Activated CD4-positive, alpha-beta memory T cell treated with anti-CD3 and anti-CD28 coated beads for 36 hours (primary cell): ENCODE measurements at regions of chr1 and their contacts with region 1.

Region 1: DNA sequence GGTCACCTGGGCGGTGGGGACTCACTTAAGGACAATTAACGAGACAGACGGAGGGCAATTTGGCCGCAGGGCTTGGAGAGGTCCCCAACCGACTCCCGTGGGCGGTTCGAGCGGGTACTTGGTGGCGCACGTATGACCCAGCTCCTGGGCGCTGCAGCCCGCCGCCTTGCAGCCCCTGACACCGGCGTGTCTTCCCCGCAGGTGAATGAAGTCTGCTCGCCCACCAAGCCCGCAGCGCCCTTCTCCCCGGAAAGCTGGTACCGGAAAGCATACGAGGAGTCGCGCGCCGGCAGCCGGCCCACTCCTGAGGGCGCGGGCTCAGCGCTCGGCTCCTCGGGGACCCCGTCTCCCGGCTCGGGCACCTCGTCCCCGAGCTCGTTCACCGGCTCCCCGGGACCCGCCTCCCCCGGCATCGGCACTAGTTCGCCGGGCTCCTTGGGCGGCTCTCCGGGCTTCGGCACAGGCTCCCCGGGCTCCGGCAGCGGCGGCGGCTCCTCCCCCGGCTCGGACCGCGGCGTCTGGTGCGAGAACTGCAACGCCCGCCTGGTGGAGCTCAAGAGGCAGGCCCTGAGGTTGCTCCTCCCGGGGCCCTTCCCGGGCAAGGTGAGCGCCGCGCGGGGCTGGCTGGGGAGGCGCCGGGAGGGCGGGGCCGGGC is 1.4 kb downstream of the KIF26B start:
- DNase-seq: peak; percentile 89
- H3K4me3 Mint-ChIP-seq: peak overlapping the region; percentile 56
- H3K27ac Mint-ChIP-seq: no peak overlapping the region
- H3K4me1 Mint-ChIP-seq: peaks cover 22% of the 10 kb centered on the region
- H3K27me3 Mint-ChIP-seq: peaks cover 55% of the 10 kb centered on the region

Region 2: GRCh38 chr1:245019910-245020486 is 136.2 kb before region 1 on chr1:
- CTCF ChIA-PET with region 1: no interaction called
- POLR2A ChIA-PET with region 1: no interaction called
- intact Hi-C with region 1: no loop called
- DNase-seq: no peak
- H3K4me3 Mint-ChIP-seq: no peak overlapping the region
- H3K27ac Mint-ChIP-seq: no peak overlapping the region
- H3K4me1 Mint-ChIP-seq: no peaks in the 10 kb centered on the region
- H3K27me3 Mint-ChIP-seq: no peaks in the 10 kb centered on the region

Region 3: DNA sequence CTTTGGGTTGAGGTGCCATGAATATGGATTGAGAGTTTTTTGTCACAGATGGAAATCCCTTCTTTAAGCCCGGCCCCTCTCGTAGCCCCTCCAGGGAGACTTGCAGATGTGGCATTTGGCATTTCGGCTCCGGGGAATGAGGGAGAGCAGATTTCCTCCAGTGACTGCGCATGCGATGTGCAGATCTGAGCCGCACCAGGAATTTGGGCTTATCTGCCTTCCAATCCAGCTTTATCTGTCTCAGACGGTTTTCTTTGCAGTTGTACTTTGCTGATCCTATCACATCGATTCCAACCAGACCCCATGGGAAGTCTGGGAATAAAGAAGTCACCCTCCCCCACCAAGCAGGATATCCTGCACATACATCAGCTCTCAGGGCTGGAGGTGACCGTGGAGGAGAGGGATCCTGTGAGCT is 10.3 kb after region 1 on chr1:
- CTCF ChIA-PET with region 1: interaction called, 12 read pairs
- POLR2A ChIA-PET with region 1: no interaction called
- intact Hi-C with region 1: no loop called
- DNase-seq: no peak
- H3K4me3 Mint-ChIP-seq: no peak overlapping the region
- H3K27ac Mint-ChIP-seq: no peak overlapping the region
- H3K4me1 Mint-ChIP-seq: no peaks in the 10 kb centered on the region
- H3K27me3 Mint-ChIP-seq: peaks cover 54% of the 10 kb centered on the region

Region 4: GRCh38 chr1:245380790-245381535 is 224.8 kb after region 1 on chr1:
- CTCF ChIA-PET with region 1: interaction called, 4 read pairs
- POLR2A ChIA-PET with region 1: no interaction called
- intact Hi-C with region 1: loop called (anchors 2 kb)
- DNase-seq: no peak
- H3K4me3 Mint-ChIP-seq: no peak overlapping the region
- H3K27ac Mint-ChIP-seq: no peak overlapping the region
- H3K4me1 Mint-ChIP-seq: peaks cover 6% of the 10 kb centered on the region
- H3K27me3 Mint-ChIP-seq: peaks cover 5% of the 10 kb centered on the region

Region 5: DNA sequence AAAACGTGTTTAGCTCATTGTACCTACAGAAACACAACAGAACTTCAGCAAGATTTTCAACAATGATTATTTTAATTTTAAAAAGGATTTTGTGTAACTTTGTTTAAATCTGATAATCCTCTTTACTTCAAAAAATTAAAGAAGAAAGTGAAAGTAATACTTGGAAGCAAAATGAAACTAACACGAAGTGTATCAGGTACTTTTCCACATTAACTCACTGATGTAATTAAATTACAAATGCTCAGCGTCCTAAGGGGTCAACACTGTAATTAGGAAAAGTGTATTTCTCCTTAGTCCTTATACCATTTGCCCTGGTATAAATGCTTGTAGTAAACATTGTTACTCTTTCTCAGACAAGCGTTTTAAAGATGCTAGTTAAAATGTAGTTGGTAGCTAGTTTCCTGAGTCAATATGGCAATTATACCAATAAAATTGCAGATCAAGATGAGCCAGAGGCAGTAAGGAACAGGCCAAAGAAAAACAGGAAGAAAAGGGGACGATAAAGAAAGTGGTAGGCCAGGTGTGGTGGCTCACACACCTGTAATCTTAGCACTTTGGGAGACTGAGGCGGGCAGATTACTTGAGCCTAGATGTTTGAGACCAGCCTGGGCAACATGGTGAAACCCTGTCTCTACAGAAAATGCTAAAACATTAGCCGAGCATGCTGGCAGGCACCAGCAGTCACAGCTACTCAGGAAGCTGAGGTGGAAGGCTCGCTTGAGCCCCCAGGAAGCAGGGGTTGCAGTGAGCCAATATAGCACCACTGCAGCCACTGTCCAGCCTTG is 797.9 kb after region 1 on chr1:
- CTCF ChIA-PET with region 1: interaction called, 6 read pairs
- POLR2A ChIA-PET with region 1: no interaction called
- intact Hi-C with region 1: loop called (anchors 5 kb)
- DNase-seq: peak; percentile 15
- H3K4me3 Mint-ChIP-seq: peak overlapping the region; percentile 65
- H3K27ac Mint-ChIP-seq: peak overlapping the region; percentile 90
- H3K4me1 Mint-ChIP-seq: peaks cover 16% of the 10 kb centered on the region
- H3K27me3 Mint-ChIP-seq: no peaks in the 10 kb centered on the region

Region 6: DNA sequence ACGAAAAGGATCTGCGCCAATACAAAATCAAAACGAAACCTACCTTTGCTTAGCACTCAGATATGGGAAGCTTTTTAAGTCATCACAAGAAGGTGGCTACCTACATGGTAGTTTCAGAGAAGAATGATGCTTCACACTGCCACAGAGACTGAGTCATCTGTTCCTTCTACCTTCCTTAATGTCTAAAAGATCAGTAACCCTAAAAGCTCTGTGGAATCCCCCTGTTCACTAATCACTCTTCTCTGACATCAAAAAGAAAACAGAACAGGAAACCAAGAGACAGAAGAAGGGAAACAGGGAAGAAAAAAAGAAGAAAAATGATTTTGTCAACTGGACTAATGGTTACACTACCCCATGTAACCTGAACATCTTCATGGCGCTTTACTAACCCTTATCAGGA is 1173.7 kb after region 1 on chr1:
- CTCF ChIA-PET with region 1: no interaction called
- POLR2A ChIA-PET with region 1: no interaction called
- intact Hi-C with region 1: loop called (anchors 10 kb)
- DNase-seq: peak; percentile 42
- H3K4me3 Mint-ChIP-seq: no peak overlapping the region
- H3K27ac Mint-ChIP-seq: peak overlapping the region; percentile 72
- H3K4me1 Mint-ChIP-seq: peaks cover 49% of the 10 kb centered on the region
- H3K27me3 Mint-ChIP-seq: no peaks in the 10 kb centered on the region

Region 7: GRCh38 chr1:246753670-246754535 is 1597.7 kb after region 1 on chr1:
- CTCF ChIA-PET with region 1: no interaction called
- POLR2A ChIA-PET with region 1: no interaction called
- intact Hi-C with region 1: loop called (anchors 10 kb)
- DNase-seq: peak; percentile 71
- H3K4me3 Mint-ChIP-seq: no peak overlapping the region
- H3K27ac Mint-ChIP-seq: no peak overlapping the region
- H3K4me1 Mint-ChIP-seq: no peaks in the 10 kb centered on the region
- H3K27me3 Mint-ChIP-seq: no peaks in the 10 kb centered on the region